Mammary epithelial cell (primary cell): ENCODE measurements at regions of chr6 and their contacts with region 1.

Region 1: GRCh38 chr6:27545271-27546046 is 72.6 kb upstream of the ZNF184 start:
- DNase-seq: peak; percentile 93
- H3K4me3 ChIP-seq: peak overlapping the region; percentile 51 to 60 (median 56)
- H3K27ac ChIP-seq: peak overlapping the region; percentile 61
- H3K4me1 ChIP-seq: peaks cover 6% of the 10 kb centered on the region
- H3K27me3 ChIP-seq: no peaks in the 10 kb centered on the region
- CTCF ChIP-seq: no peak

Region 2: DNA sequence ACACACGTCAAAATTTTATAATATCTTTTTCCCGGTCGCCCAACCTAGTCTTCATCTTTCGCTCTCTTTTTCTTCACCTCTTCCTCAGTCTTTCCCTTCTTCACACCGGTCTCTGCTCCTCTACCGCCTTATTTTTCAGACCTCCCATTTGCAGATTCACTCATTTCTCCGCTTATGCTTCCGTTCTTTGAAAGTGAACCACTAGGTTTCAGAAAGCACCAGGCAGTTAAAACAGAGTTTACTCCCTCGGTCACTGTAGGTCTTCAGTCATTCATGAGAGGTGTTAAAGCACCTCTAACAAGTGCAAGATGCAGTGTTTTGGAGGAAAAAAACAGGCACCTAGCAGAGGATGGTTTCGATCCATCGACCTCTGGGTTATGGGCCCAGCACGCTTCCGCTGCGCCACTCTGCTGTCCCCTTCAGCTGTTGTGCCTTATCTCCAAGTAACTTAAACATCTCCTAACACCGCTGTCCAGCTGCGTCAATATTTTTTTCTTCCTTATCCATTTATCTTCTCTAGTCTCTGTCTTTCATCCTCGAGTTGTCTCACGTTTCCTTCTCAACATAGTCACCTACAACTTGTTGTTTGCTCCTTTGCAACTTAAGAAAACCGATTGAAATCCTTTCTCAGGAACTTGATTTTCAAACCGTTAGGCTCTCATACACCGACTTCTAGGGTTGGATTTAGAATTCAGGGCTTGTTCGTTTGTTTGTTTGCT is 47.2 kb after region 1 on chr6:
- CTCF ChIA-PET with region 1: no interaction called
- dilution Hi-C with region 1: no loop called
- in situ Hi-C with region 1: no loop called
- intact Hi-C with region 1: loop called (anchors 2 kb)
- DNase-seq: peak; percentile 84
- H3K4me3 ChIP-seq: peak overlapping the region; percentile 43 to 62 (median 48)
- H3K27ac ChIP-seq: no peak overlapping the region
- H3K4me1 ChIP-seq: peaks cover 13% of the 10 kb centered on the region
- H3K27me3 ChIP-seq: no peaks in the 10 kb centered on the region
- CTCF ChIP-seq: no peak

Region 3: GRCh38 chr6:27672113-27672799 is 126.8 kb after region 1 on chr6:
- CTCF ChIA-PET with region 1: no interaction called
- dilution Hi-C with region 1: no loop called
- in situ Hi-C with region 1: no loop called
- intact Hi-C with region 1: loop called (anchors 5 kb)
- DNase-seq: peak; percentile 74
- H3K4me3 ChIP-seq: peak overlapping the region; percentile 32 to 46 (median 41)
- H3K27ac ChIP-seq: no peak overlapping the region
- H3K4me1 ChIP-seq: peaks cover 20% of the 10 kb centered on the region
- H3K27me3 ChIP-seq: no peaks in the 10 kb centered on the region
- CTCF ChIP-seq: no peak